Aorta (tissue), 5 donors: ENCODE measurements at regions of chr17 and their contacts with region 1.

Region 1: DNA sequence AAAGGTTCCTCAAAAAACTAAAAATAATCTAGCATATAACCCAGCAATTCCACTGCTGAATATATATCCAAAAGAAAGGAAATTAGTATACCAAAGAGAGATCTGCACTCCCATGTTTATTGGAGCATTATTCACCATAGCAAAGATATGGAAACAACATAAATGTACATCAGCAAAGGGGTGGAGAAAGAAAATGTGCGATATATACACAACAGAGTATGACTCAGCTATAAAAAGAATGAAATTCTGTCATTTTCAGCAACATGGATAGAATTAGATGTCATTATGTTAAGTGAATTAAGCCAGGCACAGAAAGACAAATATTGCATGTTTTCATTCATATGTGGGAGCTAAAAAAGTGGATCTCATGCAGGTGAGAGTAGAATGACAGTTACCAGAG is 279.6 kb upstream of the AXIN2 start:
- DNase-seq: no peak
- ATAC-seq: no peak
- H3K4me3 ChIP-seq: no peak overlapping the region
- H3K27ac ChIP-seq: no peak overlapping the region
- H3K4me1 ChIP-seq: no peaks in the 10 kb centered on the region
- H3K27me3 ChIP-seq: no peaks in the 10 kb centered on the region

Region 2: GRCh38 chr17:65799869-65800268 is 41.2 kb before region 1 on chr17:
- intact Hi-C with region 1: no loop called
- DNase-seq: no peak
- ATAC-seq: no peak
- H3K4me3 ChIP-seq: no peak overlapping the region
- H3K27ac ChIP-seq: no peak overlapping the region
- H3K4me1 ChIP-seq: no peaks in the 10 kb centered on the region
- H3K27me3 ChIP-seq: no peaks in the 10 kb centered on the region

Region 3: DNA sequence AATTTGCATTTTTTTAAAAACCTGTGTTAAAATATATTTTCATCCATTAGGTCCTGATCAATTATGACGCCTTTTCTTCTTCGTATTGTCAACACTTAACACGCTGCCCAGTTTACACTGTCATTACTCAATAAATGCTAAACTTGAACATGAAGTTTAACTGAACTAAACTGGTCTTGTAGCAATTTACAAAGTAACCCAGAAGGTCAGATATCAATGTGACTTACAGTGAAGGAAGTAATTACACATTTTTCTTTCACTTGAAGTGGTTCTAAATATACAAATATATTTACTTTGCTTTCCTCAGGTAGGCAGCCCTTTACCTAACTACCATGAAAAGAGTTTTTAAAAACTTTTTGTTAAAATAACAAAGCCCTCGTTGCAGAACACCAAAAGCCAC is 23.1 kb before region 1 on chr17:
- intact Hi-C with region 1: loop called in 1 of 2 experiments (anchors 2 kb)
- DNase-seq: no peak
- ATAC-seq: no peak
- H3K4me3 ChIP-seq: no peak overlapping the region
- H3K27ac ChIP-seq: no peak overlapping the region
- H3K4me1 ChIP-seq: no peaks in the 10 kb centered on the region
- H3K27me3 ChIP-seq: no peaks in the 10 kb centered on the region